ENCODE measurements at regions of chr17 and their contacts with region 1.

Region 1: GRCh38 chr17:4733073-4733531 is 1.9 kb downstream of the MED11 start:
- DNase-seq: no peak
- ATAC-seq: peak; percentile 40
- H3K4me3 ChIP-seq: no peak overlapping the region
- H3K4me3 Mint-ChIP-seq: peak overlapping the region in 8 of 10 donors; percentile 8 to 99 (median 44)
- H3K27ac ChIP-seq: no peak overlapping the region
- H3K27ac Mint-ChIP-seq: peak overlapping the region in 4 of 9 donors; percentile 25 to 55 (median 44)
- H3K4me1 ChIP-seq: peaks cover 10 to 14% of the 10 kb centered on the region in 2 donors
- H3K4me1 Mint-ChIP-seq: peaks cover 4 to 39% (median 28%) of the 10 kb centered on the region in 7 donors
- H3K27me3 ChIP-seq: no peaks in the 10 kb centered on the region
- H3K27me3 Mint-ChIP-seq: peaks cover 0 to 6% (median 0%) of the 10 kb centered on the region in 5 donors

Region 2: GRCh38 chr17:4721203-4722135 is 11.6 kb before region 1 on chr17:
- CTCF ChIA-PET with region 1: interaction called, 5 read pairs
- POLR2A ChIA-PET with region 1: interaction called, 11 read pairs
- intact Hi-C with region 1: no loop called
- DNase-seq: no peak
- ATAC-seq: peak; percentile 49
- H3K4me3 ChIP-seq: no peak overlapping the region
- H3K4me3 Mint-ChIP-seq: no peak overlapping the region
- H3K27ac ChIP-seq: no peak overlapping the region
- H3K27ac Mint-ChIP-seq: peak overlapping the region; percentile 4 to 82 (median 25)
- H3K4me1 ChIP-seq: no peaks in the 10 kb centered on the region
- H3K4me1 Mint-ChIP-seq: peaks cover 0 to 33% (median 6%) of the 10 kb centered on the region in 7 donors
- H3K27me3 ChIP-seq: no peaks in the 10 kb centered on the region
- H3K27me3 Mint-ChIP-seq: no peaks in the 10 kb centered on the region

Region 3: GRCh38 chr17:4806777-4807604 is 73.9 kb after region 1 on chr17 and contains the start of gene PLD2:
- CTCF ChIA-PET with region 1: no interaction called
- POLR2A ChIA-PET with region 1: interaction called, 6 read pairs
- intact Hi-C with region 1: loop called (anchors 1 kb)
- DNase-seq: peak; percentile 71 to 95 (median 80)
- ATAC-seq: peak; percentile 100
- H3K4me3 ChIP-seq: peak within 1 kb of the TSS; percentile 47
- H3K4me3 Mint-ChIP-seq: peak within 1 kb of the TSS; percentile 71 to 88 (median 80)
- H3K27ac ChIP-seq: peak within 1 kb of the TSS; percentile 79
- H3K27ac Mint-ChIP-seq: peak within 1 kb of the TSS in 7 of 9 donors; percentile 48 to 78 (median 62)
- H3K4me1 ChIP-seq: peaks cover 0 to 5% of the 10 kb centered on the region in 2 donors
- H3K4me1 Mint-ChIP-seq: peaks cover 7 to 23% (median 19%) of the 10 kb centered on the region in 7 donors
- H3K27me3 ChIP-seq: no peaks in the 10 kb centered on the region
- H3K27me3 Mint-ChIP-seq: peaks cover 0 to 7% (median 0%) of the 10 kb centered on the region in 5 donors
- total RNA-seq, gene PLD2: 22.9 to 42.7 (median 26.8) TPM

Region 4: GRCh38 chr17:4891411-4892342 is 158.6 kb after region 1 on chr17:
- CTCF ChIA-PET with region 1: interaction called, 3 read pairs
- POLR2A ChIA-PET with region 1: interaction called, 3 read pairs
- intact Hi-C with region 1: loop called in 1 of 2 experiments (anchors 1 kb)
- DNase-seq: no peak
- ATAC-seq: no peak
- H3K4me3 ChIP-seq: no peak overlapping the region
- H3K4me3 Mint-ChIP-seq: no peak overlapping the region
- H3K27ac ChIP-seq: no peak overlapping the region
- H3K27ac Mint-ChIP-seq: no peak overlapping the region
- H3K4me1 ChIP-seq: no peaks in the 10 kb centered on the region
- H3K4me1 Mint-ChIP-seq: peaks cover 0 to 5% (median 2%) of the 10 kb centered on the region in 7 donors
- H3K27me3 ChIP-seq: no peaks in the 10 kb centered on the region
- H3K27me3 Mint-ChIP-seq: no peaks in the 10 kb centered on the region

Region 5: GRCh38 chr17:4966844-4967538 is 233.9 kb after region 1 on chr17:
- CTCF ChIA-PET with region 1: no interaction called
- POLR2A ChIA-PET with region 1: interaction called, 3 read pairs
- intact Hi-C with region 1: loop called in 1 of 2 experiments (anchors 1 kb)
- DNase-seq: peak in 8 of 9 donors; percentile 25 to 97 (median 95)
- ATAC-seq: peak; percentile 89
- H3K4me3 ChIP-seq: peak overlapping the region; percentile 93
- H3K4me3 Mint-ChIP-seq: no peak overlapping the region
- H3K27ac ChIP-seq: peak overlapping the region; percentile 79
- H3K27ac Mint-ChIP-seq: peak overlapping the region in 3 of 9 donors; percentile 72 to 90 (median 81)
- H3K4me1 ChIP-seq: peaks cover 17 to 22% of the 10 kb centered on the region in 2 donors
- H3K4me1 Mint-ChIP-seq: peaks cover 15 to 32% (median 24%) of the 10 kb centered on the region in 7 donors
- H3K27me3 ChIP-seq: no peaks in the 10 kb centered on the region
- H3K27me3 Mint-ChIP-seq: no peaks in the 10 kb centered on the region